CD8-positive, alpha-beta T cell (primary cell): ENCODE measurements at regions of chr17 and their contacts with region 1.

Region 1: GRCh38 chr17:38752119-38752929 is at the start of gene PSMB3:
- DNase-seq: peak; percentile 90 to 100 (median 95)
- ATAC-seq: peak; percentile 87
- H3K4me3 ChIP-seq: peak within 1 kb of the TSS; percentile 88 to 99
- H3K4me3 Mint-ChIP-seq: peak within 1 kb of the TSS; percentile 96
- H3K27ac ChIP-seq: peak within 1 kb of the TSS; percentile 70 to 85
- H3K27ac Mint-ChIP-seq: peak within 1 kb of the TSS; percentile 97
- H3K4me1 ChIP-seq: peaks cover 53% of the 10 kb centered on the region
- H3K4me1 Mint-ChIP-seq: peaks cover 54% of the 10 kb centered on the region
- H3K27me3 ChIP-seq: peaks cover 21 to 31% of the 10 kb centered on the region in 2 experiments
- H3K27me3 Mint-ChIP-seq: peaks cover 19% of the 10 kb centered on the region
- CTCF ChIP-seq: no peak
- total RNA-seq, gene PSMB3: 53.6 to 64.2 TPM

Region 2: DNA sequence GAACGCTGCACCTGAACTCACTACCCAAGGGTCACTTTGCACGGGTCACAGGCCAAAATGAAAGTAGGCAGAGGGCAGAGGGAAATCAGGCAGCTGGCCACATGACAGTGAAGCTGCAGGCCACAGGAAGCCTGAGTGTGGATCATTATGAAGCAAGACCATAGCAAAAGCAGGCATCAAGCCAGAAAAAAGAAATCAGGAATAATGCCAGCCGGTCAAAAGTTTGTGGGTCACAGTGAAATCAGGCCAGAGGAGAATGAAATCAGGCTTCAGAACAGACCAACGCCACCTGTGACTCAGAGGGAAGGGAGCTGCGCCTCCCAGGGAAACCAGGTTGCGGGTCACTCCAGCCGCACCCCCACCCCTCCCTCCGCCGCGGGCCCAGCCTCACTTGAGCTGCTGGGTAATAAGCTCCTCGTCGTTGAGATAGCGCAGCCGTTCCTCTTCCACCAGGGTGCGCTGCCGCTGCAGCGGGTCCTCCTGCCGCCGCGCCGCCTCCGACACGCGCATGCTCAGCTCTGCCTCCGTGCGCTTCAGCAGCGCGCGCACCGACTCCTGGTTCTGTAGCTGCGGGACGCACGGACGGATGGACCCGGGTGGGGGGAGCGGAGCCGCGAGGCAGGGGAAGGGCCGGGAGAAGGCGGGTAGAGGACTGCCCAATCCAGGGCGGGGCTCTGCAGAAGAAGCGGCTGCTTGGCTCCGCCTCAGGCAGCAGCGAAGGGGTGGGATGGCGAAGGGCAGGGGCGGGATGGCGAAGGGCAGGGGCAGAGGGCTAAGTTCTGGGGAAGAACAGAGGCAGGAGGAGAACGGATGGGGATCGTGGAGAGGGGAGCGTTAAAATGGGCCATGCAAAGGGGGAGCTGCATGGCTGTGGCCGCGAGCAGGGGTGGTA is 194.2 kb before region 1 on chr17:
- CTCF ChIA-PET with region 1: interaction called, 4 read pairs
- POLR2A ChIA-PET with region 1: no interaction called
- intact Hi-C with region 1: loop called in 1 of 2 experiments (anchors 5 kb)
- DNase-seq: peak; percentile 75 to 94 (median 88)
- ATAC-seq: peak; percentile 74
- H3K4me3 ChIP-seq: peak overlapping the region; percentile 60 to 77
- H3K4me3 Mint-ChIP-seq: peak overlapping the region; percentile 92
- H3K27ac ChIP-seq: no peak overlapping the region
- H3K27ac Mint-ChIP-seq: no peak overlapping the region
- H3K4me1 ChIP-seq: peaks cover 28% of the 10 kb centered on the region
- H3K4me1 Mint-ChIP-seq: peaks cover 26% of the 10 kb centered on the region
- H3K27me3 ChIP-seq: peaks cover 17 to 27% of the 10 kb centered on the region in 2 experiments
- H3K27me3 Mint-ChIP-seq: peaks cover 24% of the 10 kb centered on the region
- CTCF ChIP-seq: peak; percentile 93

Region 3: GRCh38 chr17:38702166-38702899 is 50.0 kb before region 1 on chr17:
- CTCF ChIA-PET with region 1: no interaction called
- POLR2A ChIA-PET with region 1: interaction called, 14 read pairs
- intact Hi-C with region 1: loop called (anchors 1 kb)
- DNase-seq: peak; percentile 58 to 91 (median 78)
- ATAC-seq: peak; percentile 27
- H3K4me3 ChIP-seq: peak overlapping the region; percentile 96 to 97
- H3K4me3 Mint-ChIP-seq: peak overlapping the region; percentile 99
- H3K27ac ChIP-seq: peak overlapping the region; percentile 70 to 94
- H3K27ac Mint-ChIP-seq: peak overlapping the region; percentile 97
- H3K4me1 ChIP-seq: peaks cover 33% of the 10 kb centered on the region
- H3K4me1 Mint-ChIP-seq: peaks cover 51% of the 10 kb centered on the region
- H3K27me3 ChIP-seq: no peaks in the 10 kb centered on the region
- H3K27me3 Mint-ChIP-seq: no peaks in the 10 kb centered on the region
- CTCF ChIP-seq: no peak

Region 4: GRCh38 chr17:38799378-38800236 is 47.3 kb after region 1 on chr17 and contains the start of gene PIP4K2B:
- CTCF ChIA-PET with region 1: no interaction called
- POLR2A ChIA-PET with region 1: interaction called, 4 read pairs
- intact Hi-C with region 1: loop called (anchors 1 kb)
- DNase-seq: peak; percentile 58 to 93 (median 82)
- ATAC-seq: peak; percentile 76
- H3K4me3 ChIP-seq: peak within 1 kb of the TSS; percentile 88 to 95
- H3K4me3 Mint-ChIP-seq: peak within 1 kb of the TSS; percentile 91
- H3K27ac ChIP-seq: peak within 1 kb of the TSS; percentile 54 to 86
- H3K27ac Mint-ChIP-seq: peak within 1 kb of the TSS; percentile 90
- H3K4me1 ChIP-seq: peaks cover 31% of the 10 kb centered on the region
- H3K4me1 Mint-ChIP-seq: peaks cover 40% of the 10 kb centered on the region
- H3K27me3 ChIP-seq: no peaks in the 10 kb centered on the region
- H3K27me3 Mint-ChIP-seq: no peaks in the 10 kb centered on the region
- CTCF ChIP-seq: no peak
- total RNA-seq, gene PIP4K2B: 9.9 to 13.0 TPM

Region 5: DNA sequence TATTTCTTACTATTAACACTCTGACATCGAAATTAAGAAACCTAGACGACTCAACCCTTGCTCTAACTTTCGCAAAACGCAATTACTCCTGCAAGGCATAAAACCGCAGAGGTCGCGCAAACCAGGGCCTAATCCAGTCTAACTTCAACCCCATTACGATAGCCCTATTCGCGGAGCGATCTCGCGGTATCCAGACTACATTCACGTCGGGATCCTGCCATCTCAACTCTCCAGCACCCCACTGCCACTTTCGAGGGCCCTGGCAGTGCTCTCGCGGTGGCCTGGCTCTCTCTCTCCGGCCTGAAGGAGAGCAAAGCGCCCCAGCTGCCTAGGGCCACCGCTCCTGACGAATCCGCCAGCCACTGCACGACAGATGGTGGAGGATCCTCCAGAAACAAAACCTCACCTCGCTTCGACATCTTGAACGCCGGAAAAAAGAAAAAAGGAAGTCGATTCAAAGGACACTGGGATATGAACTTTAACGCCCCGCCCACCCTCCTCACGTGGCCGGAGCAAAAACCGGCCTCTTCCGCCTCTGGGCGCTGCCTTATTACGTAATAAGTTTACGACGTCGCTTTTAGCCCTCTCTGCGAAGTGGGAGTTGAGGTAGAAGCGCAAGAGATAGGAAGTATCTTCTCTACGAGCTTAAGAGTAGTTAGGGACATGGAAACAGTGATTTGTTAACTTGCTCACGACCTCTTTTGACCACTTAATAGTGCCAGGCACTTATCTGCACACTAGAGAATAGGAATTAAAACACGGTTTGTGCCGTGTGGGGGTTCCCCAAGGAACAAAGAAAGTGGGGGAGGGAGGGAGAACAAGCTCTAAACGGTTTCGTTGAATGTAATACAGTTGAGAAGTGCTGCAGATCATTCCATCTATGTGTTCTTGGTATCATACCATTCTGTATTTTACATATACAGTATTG is 101.2 kb after region 1 on chr17 and contains the start of gene RPL23:
- CTCF ChIA-PET with region 1: interaction called, 3 read pairs
- POLR2A ChIA-PET with region 1: interaction called, 7 read pairs
- intact Hi-C with region 1: loop called in 1 of 2 experiments (anchors 1 kb)
- DNase-seq: peak; percentile 78 to 98 (median 91)
- ATAC-seq: peak; percentile 78
- H3K4me3 ChIP-seq: peak within 1 kb of the TSS; percentile 56 to 74
- H3K4me3 Mint-ChIP-seq: peak within 1 kb of the TSS; percentile 93
- H3K27ac ChIP-seq: peak within 1 kb of the TSS; percentile 84 to 94
- H3K27ac Mint-ChIP-seq: peak within 1 kb of the TSS; percentile 99
- H3K4me1 ChIP-seq: peaks cover 22% of the 10 kb centered on the region
- H3K4me1 Mint-ChIP-seq: peaks cover 46% of the 10 kb centered on the region
- H3K27me3 ChIP-seq: no peaks in the 10 kb centered on the region
- H3K27me3 Mint-ChIP-seq: no peaks in the 10 kb centered on the region
- CTCF ChIP-seq: no peak
- total RNA-seq, gene RPL23: 2,036 to 2,052 TPM

Region 6: GRCh38 chr17:39199820-39200069 is 447.4 kb after region 1 on chr17:
- CTCF ChIA-PET with region 1: no interaction called
- POLR2A ChIA-PET with region 1: no interaction called
- intact Hi-C with region 1: loop called (anchors 1 to 2 kb)
- DNase-seq: peak; percentile 70 to 96 (median 86)
- ATAC-seq: peak; percentile 61
- H3K4me3 ChIP-seq: peak overlapping the region; percentile 77 to 87
- H3K4me3 Mint-ChIP-seq: peak overlapping the region; percentile 95
- H3K27ac ChIP-seq: peak overlapping the region; percentile 94 to 98
- H3K27ac Mint-ChIP-seq: peak overlapping the region; percentile 100
- H3K4me1 ChIP-seq: peaks cover 56% of the 10 kb centered on the region
- H3K4me1 Mint-ChIP-seq: peaks cover 69% of the 10 kb centered on the region
- H3K27me3 ChIP-seq: no peaks in the 10 kb centered on the region
- H3K27me3 Mint-ChIP-seq: no peaks in the 10 kb centered on the region
- CTCF ChIP-seq: no peak